ENCODE measurements at regions of chr2 and their contacts with region 1.

Region 1: GRCh38 chr2:70190418-70191243 is at the start of gene C2orf42:
- DNase-seq: peak; percentile 96 to 97 (median 97)
- H3K4me3 ChIP-seq: peak within 1 kb of the TSS; percentile 93 to 96
- H3K4me3 Mint-ChIP-seq: peak within 1 kb of the TSS; percentile 90 to 98 (median 96)
- H3K27ac ChIP-seq: peak within 1 kb of the TSS; percentile 81
- H3K27ac Mint-ChIP-seq: peak within 1 kb of the TSS; percentile 98 to 100 (median 99)
- H3K4me1 ChIP-seq: peaks cover 15% of the 10 kb centered on the region
- H3K4me1 Mint-ChIP-seq: peaks cover 15 to 25% (median 20%) of the 10 kb centered on the region in 4 donors
- H3K27me3 ChIP-seq: no peaks in the 10 kb centered on the region
- H3K27me3 Mint-ChIP-seq: peaks cover 0 to 1% of the 10 kb centered on the region in 2 donors
- total RNA-seq, gene C2orf42: 36.7 to 47.9 TPM

Region 2: GRCh38 chr2:69829256-69830046 is 361.2 kb before region 1 on chr2 and contains the start of gene GMCL1:
- CTCF ChIA-PET with region 1: interaction called, 3 read pairs
- POLR2A ChIA-PET with region 1: interaction called, 3 read pairs
- intact Hi-C with region 1: loop called (anchors 1 kb)
- DNase-seq: peak; percentile 98 to 99 (median 99)
- H3K4me3 ChIP-seq: peak within 1 kb of the TSS; percentile 54 to 71
- H3K4me3 Mint-ChIP-seq: peak within 1 kb of the TSS; percentile 87 to 98 (median 96)
- H3K27ac ChIP-seq: peak within 1 kb of the TSS; percentile 92
- H3K27ac Mint-ChIP-seq: peak within 1 kb of the TSS; percentile 93 to 98 (median 96)
- H3K4me1 ChIP-seq: peaks cover 42% of the 10 kb centered on the region
- H3K4me1 Mint-ChIP-seq: peaks cover 21 to 69% (median 43%) of the 10 kb centered on the region in 4 donors
- H3K27me3 ChIP-seq: no peaks in the 10 kb centered on the region
- H3K27me3 Mint-ChIP-seq: no peaks in the 10 kb centered on the region
- total RNA-seq, gene GMCL1: 28.2 to 31.8 TPM

Region 3: GRCh38 chr2:69946351-69947077 is 244.1 kb before region 1 on chr2:
- CTCF ChIA-PET with region 1: no interaction called
- POLR2A ChIA-PET with region 1: interaction called, 12 read pairs
- intact Hi-C with region 1: no loop called
- DNase-seq: peak; percentile 50 to 79 (median 64)
- H3K4me3 ChIP-seq: peak overlapping the region in 1 of 2 donors; percentile 21
- H3K4me3 Mint-ChIP-seq: peak overlapping the region in 7 of 8 donors; percentile 47 to 82 (median 64)
- H3K27ac ChIP-seq: peak overlapping the region; percentile 39
- H3K27ac Mint-ChIP-seq: peak overlapping the region; percentile 87 to 96 (median 90)
- H3K4me1 ChIP-seq: peaks cover 26% of the 10 kb centered on the region
- H3K4me1 Mint-ChIP-seq: peaks cover 24 to 36% (median 31%) of the 10 kb centered on the region in 4 donors
- H3K27me3 ChIP-seq: no peaks in the 10 kb centered on the region
- H3K27me3 Mint-ChIP-seq: no peaks in the 10 kb centered on the region

Region 4: DNA sequence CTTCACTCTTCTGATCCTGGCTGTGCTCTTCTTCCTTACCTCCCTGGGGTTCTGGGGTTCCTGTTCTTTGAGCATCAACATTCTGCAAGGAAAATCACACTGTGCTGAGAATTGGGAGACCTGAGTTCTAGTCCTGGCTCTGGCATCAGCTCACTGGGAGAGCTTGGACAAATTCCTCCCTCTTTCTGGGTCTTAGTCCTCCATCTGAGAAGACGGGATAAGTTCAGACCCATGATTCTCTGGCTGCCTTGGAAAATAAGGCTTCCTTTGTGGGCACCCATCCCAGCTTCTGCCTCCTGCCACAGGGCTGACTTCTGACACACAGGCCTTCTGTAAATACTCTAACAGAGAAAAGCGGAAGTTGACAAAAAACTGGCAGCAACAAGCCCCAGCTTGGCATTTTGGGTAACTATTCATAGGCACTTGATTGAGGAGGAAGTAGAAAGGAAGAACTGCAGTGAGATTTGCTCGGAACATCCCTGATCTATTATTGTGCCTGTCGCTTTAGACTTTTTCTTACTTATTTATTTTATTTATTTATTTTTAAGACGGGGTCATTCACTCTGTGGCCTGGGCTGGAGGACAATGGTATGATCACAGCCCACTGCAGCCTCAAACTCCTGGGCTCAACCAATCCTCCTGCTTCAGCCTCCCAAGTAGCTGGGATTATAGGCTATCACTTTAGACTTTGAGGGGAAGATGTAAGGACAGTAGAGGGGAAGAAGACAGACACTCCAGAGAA is 95.5 kb before region 1 on chr2:
- CTCF ChIA-PET with region 1: no interaction called
- POLR2A ChIA-PET with region 1: interaction called, 10 read pairs
- intact Hi-C with region 1: no loop called
- DNase-seq: peak; percentile 69 to 77 (median 74)
- H3K4me3 ChIP-seq: peak overlapping the region; percentile 2 to 23
- H3K4me3 Mint-ChIP-seq: peak overlapping the region; percentile 78 to 90 (median 84)
- H3K27ac ChIP-seq: peak overlapping the region; percentile 76
- H3K27ac Mint-ChIP-seq: peak overlapping the region; percentile 85 to 100 (median 97)
- H3K4me1 ChIP-seq: peaks cover 44% of the 10 kb centered on the region
- H3K4me1 Mint-ChIP-seq: peaks cover 36 to 55% (median 43%) of the 10 kb centered on the region in 4 donors
- H3K27me3 ChIP-seq: no peaks in the 10 kb centered on the region
- H3K27me3 Mint-ChIP-seq: no peaks in the 10 kb centered on the region

Region 5: GRCh38 chr2:70132244-70133126 is 58.1 kb before region 1 on chr2:
- CTCF ChIA-PET with region 1: no interaction called
- POLR2A ChIA-PET with region 1: interaction called, 15 read pairs
- intact Hi-C with region 1: no loop called
- DNase-seq: peak; percentile 52 to 72 (median 63)
- H3K4me3 ChIP-seq: peak overlapping the region; percentile 24 to 55
- H3K4me3 Mint-ChIP-seq: peak overlapping the region; percentile 81 to 92 (median 86)
- H3K27ac ChIP-seq: peak overlapping the region; percentile 83
- H3K27ac Mint-ChIP-seq: peak overlapping the region; percentile 92 to 100 (median 97)
- H3K4me1 ChIP-seq: peaks cover 87% of the 10 kb centered on the region
- H3K4me1 Mint-ChIP-seq: peaks cover 54 to 88% (median 66%) of the 10 kb centered on the region in 4 donors
- H3K27me3 ChIP-seq: no peaks in the 10 kb centered on the region
- H3K27me3 Mint-ChIP-seq: no peaks in the 10 kb centered on the region

Region 6: GRCh38 chr2:70248181-70248847 is 57.7 kb after region 1 on chr2 and contains the start of gene TIA1:
- CTCF ChIA-PET with region 1: interaction called, 3 read pairs
- POLR2A ChIA-PET with region 1: interaction called, 11 read pairs
- intact Hi-C with region 1: loop called (anchors 1 kb)
- DNase-seq: peak; percentile 95 to 99 (median 98)
- H3K4me3 ChIP-seq: peak within 1 kb of the TSS; percentile 39 to 89
- H3K4me3 Mint-ChIP-seq: peak within 1 kb of the TSS; percentile 90 to 99 (median 96)
- H3K27ac ChIP-seq: peak within 1 kb of the TSS; percentile 95
- H3K27ac Mint-ChIP-seq: peak within 1 kb of the TSS; percentile 93 to 99 (median 99)
- H3K4me1 ChIP-seq: peaks cover 39% of the 10 kb centered on the region
- H3K4me1 Mint-ChIP-seq: peaks cover 26 to 54% (median 33%) of the 10 kb centered on the region in 4 donors
- H3K27me3 ChIP-seq: no peaks in the 10 kb centered on the region
- H3K27me3 Mint-ChIP-seq: peaks cover 2 to 4% of the 10 kb centered on the region in 2 donors
- total RNA-seq, gene TIA1: 200 to 208 TPM